ENCODE measurements at regions of chr16 and their contacts with region 1.

Region 1: DNA sequence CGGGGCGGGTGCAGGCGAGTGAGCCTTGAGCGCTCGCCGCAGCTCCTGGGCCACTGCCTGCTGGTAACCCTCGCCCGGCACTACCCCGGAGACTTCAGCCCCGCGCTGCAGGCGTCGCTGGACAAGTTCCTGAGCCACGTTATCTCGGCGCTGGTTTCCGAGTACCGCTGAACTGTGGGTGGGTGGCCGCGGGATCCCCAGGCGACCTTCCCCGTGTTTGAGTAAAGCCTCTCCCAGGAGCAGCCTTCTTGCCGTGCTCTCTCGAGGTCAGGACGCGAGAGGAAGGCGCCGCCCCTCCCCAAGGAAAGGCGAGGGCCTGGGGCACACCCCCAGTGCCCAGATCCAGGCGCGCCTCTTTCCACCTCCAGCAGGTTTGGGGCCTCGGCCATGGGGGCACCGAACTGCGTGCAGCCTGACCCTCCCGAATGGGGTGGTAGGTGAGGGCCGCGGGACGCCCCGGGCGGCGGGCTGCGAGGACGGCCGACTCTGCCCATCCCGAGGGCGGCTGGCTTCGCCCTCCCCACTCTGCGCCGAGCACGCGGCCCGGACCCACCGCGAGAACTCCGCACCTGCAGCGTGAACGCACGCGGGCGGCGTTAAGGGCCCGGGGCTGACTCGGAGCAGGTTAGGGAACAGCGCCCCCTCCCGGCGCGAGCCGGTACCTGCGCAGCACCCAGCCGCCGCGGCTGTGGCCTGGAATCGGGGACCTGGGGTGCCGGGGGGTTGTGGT is 844 bp downstream of the HBQ1 start:
- DNase-seq: no peak
- H3K4me3 ChIP-seq: peak overlapping the region; percentile 50
- H3K27ac ChIP-seq: no peak overlapping the region
- H3K27me3 ChIP-seq: peaks cover 25% of the 10 kb centered on the region
- CTCF ChIP-seq: peak; percentile 89

Region 2: DNA sequence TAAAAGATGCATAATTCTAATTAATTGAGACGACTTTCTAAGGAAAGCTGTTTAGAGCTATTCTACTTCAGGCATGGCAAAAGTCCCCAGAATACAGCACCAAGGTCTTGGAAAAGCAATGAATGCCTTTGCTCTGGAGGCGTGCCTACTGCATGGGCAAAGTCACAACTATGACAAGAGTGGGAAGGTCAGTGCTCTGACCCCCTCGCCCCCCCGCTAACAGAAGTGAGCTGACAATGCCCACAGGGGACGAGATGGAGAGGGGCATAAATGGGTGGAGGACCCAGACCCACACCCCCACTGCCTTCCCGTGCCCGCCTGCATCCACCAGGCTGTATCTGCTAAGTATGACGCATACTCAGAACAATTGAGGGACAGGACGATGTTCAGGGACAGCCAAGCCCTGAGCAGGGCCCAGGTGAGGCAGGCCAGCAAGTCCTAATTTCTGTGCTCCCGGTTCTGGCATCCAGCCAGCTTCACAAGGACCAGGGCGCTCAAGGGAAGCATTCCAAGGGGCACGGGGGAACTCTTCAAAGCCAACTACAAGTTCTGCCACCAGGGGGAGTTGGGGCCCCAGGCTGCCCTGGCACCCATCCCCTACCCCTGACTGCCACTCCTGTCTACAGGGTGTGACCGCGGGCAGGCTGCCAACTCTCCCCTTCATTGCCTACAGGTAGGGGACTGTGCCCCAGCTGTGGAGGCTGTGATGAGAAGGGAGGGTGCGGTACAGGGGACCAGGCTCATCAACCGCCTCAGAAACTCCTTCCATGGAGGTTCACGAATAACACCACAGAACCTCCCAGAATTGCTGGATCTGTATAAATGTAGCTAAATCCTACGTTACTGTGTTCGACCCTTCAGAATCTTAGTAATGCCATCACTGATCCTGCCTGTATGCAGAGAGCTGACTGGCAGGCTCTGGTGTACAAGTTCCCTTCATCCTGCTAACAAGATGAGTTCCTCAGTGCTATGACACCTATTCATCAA is 63.4 kb before region 1 on chr16:
- CTCF ChIA-PET with region 1: interaction called, 12 read pairs
- POLR2A ChIA-PET with region 1: no interaction called
- DNase-seq: no peak
- H3K4me3 ChIP-seq: no peak overlapping the region
- H3K27ac ChIP-seq: no peak overlapping the region
- H3K27me3 ChIP-seq: no peaks in the 10 kb centered on the region
- CTCF ChIP-seq: peak; percentile 73

Region 3: GRCh38 chr16:191854-192550 is 10.9 kb after region 1 on chr16:
- CTCF ChIA-PET with region 1: interaction called, 13 read pairs
- POLR2A ChIA-PET with region 1: interaction called, 5 read pairs
- DNase-seq: no peak
- H3K4me3 ChIP-seq: no peak overlapping the region
- H3K27ac ChIP-seq: no peak overlapping the region
- H3K27me3 ChIP-seq: no peaks in the 10 kb centered on the region
- CTCF ChIP-seq: no peak

Measured in AG04450 (cell line).